Naive thymus-derived CD4-positive, alpha-beta T cell (primary cell): ENCODE measurements at regions of chr19 and their contacts with region 1.

Region 1: GRCh38 chr19:50329146-50329925 is at the start of gene KCNC3:
- DNase-seq: peak in 8 of 9 donors; percentile 69 to 96 (median 86)
- ATAC-seq: peak; percentile 77
- H3K4me3 ChIP-seq: peak within 1 kb of the TSS; percentile 39
- H3K4me3 Mint-ChIP-seq: peak within 1 kb of the TSS; percentile 72 to 97 (median 86)
- H3K27ac ChIP-seq: no peak within 1 kb of the TSS
- H3K27ac Mint-ChIP-seq: peak within 1 kb of the TSS; percentile 55 to 96 (median 87)
- H3K4me1 ChIP-seq: peaks cover 42 to 62% of the 10 kb centered on the region in 2 donors
- H3K4me1 Mint-ChIP-seq: peaks cover 43 to 75% (median 73%) of the 10 kb centered on the region in 7 donors
- H3K27me3 ChIP-seq: peaks cover 15 to 28% of the 10 kb centered on the region in 2 donors
- H3K27me3 Mint-ChIP-seq: peaks cover 20 to 62% (median 41%) of the 10 kb centered on the region in 5 donors
- total RNA-seq, gene KCNC3: 1.9 to 11.1 (median 2.4) TPM

Region 2: GRCh38 chr19:50376166-50377050 is 47.1 kb after region 1 on chr19 and contains the start of gene NR1H2:
- CTCF ChIA-PET with region 1: no interaction called
- POLR2A ChIA-PET with region 1: no interaction called
- intact Hi-C with region 1: loop called (anchors 1 kb)
- DNase-seq: peak; percentile 89 to 97 (median 95)
- ATAC-seq: peak; percentile 94
- H3K4me3 ChIP-seq: peak within 1 kb of the TSS; percentile 99
- H3K4me3 Mint-ChIP-seq: peak within 1 kb of the TSS; percentile 92 to 100 (median 98)
- H3K27ac ChIP-seq: peak within 1 kb of the TSS; percentile 100
- H3K27ac Mint-ChIP-seq: peak within 1 kb of the TSS; percentile 99 to 100 (median 100)
- H3K4me1 ChIP-seq: peaks cover 4 to 10% of the 10 kb centered on the region in 2 donors
- H3K4me1 Mint-ChIP-seq: peaks cover 12 to 37% (median 24%) of the 10 kb centered on the region in 7 donors
- H3K27me3 ChIP-seq: no peaks in the 10 kb centered on the region
- H3K27me3 Mint-ChIP-seq: no peaks in the 10 kb centered on the region
- total RNA-seq, gene NR1H2: 66.6 to 284 (median 114) TPM

Region 3: DNA sequence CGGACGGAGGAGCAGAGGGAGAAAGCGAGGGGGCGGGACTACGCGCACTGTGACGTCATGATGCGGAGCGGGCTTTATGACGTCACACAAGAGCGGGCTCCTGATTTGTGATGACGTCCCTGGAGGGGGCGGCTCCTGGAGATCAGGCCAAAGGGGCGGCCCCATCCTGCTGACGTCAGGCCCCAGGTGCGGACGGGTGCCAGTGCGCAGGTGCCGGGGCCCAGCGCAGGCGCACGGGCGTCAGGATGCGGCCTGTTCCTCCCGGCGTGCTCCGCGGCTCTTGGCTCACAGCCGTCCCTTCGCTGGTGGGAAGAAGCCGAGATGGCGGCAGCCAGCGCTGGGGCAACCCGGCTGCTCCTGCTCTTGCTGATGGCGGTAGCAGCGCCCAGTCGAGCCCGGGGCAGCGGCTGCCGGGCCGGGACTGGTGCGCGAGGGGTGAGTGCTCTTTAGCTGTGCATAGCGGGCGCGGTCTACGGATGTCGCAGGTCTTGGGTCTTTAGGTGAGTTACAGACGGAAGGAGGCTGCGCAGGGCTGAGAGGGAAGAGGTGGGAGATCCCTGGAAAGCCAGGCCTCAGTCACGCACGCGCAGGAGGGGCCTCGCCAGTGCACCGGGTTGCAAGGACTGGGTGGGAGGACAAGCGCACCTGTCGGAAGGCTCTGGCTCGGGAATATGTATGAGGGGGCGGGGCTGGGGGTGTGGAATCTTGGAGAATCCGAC is 147.0 kb after region 1 on chr19 and contains the starts of genes EMC10 and GARIN5A:
- CTCF ChIA-PET with region 1: no interaction called
- POLR2A ChIA-PET with region 1: no interaction called
- intact Hi-C with region 1: loop called in 1 of 2 experiments (anchors 1 kb)
- DNase-seq: peak; percentile 92 to 96 (median 95)
- ATAC-seq: peak; percentile 97
- H3K4me3 ChIP-seq: peak within 1 kb of the TSS; percentile 96
- H3K4me3 Mint-ChIP-seq: peak within 1 kb of the TSS; percentile 94 to 99 (median 98)
- H3K27ac ChIP-seq: peak within 1 kb of the TSS; percentile 96
- H3K27ac Mint-ChIP-seq: peak within 1 kb of the TSS; percentile 88 to 98 (median 96)
- H3K4me1 ChIP-seq: peaks cover 14 to 19% of the 10 kb centered on the region in 2 donors
- H3K4me1 Mint-ChIP-seq: peaks cover 21 to 36% (median 27%) of the 10 kb centered on the region in 7 donors
- H3K27me3 ChIP-seq: no peaks in the 10 kb centered on the region
- H3K27me3 Mint-ChIP-seq: no peaks in the 10 kb centered on the region
- total RNA-seq, gene EMC10: 75.5 to 95.2 (median 88.1) TPM
- total RNA-seq, gene GARIN5A: 0.59 to 0.93 (median 0.68) TPM in 4 of 5 experiments, not detected in the other

Region 4: DNA sequence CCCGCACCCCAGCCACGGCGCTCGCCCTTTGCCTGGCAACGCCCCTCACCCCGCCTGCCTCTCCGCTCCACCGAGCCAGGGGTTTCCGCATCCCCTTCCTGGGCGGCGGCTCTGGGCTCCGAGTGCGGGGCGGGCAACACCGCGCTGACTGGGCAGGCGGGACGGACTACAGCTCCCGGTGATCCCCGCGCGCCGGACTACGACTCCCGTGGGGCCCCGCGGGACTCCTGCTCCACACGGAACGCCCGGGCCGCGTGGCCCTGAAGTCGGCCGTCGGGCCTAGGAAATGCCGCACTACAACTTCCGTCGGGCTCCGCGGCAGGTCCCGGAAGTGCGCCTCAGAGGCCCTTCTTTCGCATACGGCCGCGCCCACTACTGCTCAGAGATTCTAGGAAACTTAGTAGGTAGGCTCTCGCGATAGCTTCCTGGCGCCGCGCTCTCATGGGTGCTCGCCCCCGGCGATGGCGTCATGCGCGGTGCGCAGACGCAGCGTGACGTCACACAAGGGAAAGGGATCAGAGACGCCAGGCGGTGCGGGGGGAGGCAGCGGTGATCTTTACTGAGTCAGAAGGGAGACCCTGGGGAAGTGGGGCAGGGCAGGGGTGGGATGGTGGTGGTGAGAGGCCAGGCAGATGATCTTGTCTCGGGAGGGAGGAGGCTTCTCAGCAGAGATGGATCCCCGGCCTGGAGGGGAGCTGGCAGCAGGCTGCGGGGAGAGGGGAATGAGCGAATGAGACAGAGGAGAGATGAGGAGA is 181.9 kb after region 1 on chr19 and contains the start of gene JOSD2:
- CTCF ChIA-PET with region 1: no interaction called
- POLR2A ChIA-PET with region 1: interaction called, 5 read pairs
- intact Hi-C with region 1: loop called (anchors 1 kb)
- DNase-seq: peak; percentile 89 to 99 (median 96)
- ATAC-seq: peak; percentile 94
- H3K4me3 ChIP-seq: peak within 1 kb of the TSS; percentile 75
- H3K4me3 Mint-ChIP-seq: peak within 1 kb of the TSS; percentile 75 to 97 (median 88)
- H3K27ac ChIP-seq: peak within 1 kb of the TSS; percentile 86
- H3K27ac Mint-ChIP-seq: peak within 1 kb of the TSS; percentile 87 to 99 (median 97)
- H3K4me1 ChIP-seq: peaks cover 7 to 16% of the 10 kb centered on the region in 2 donors
- H3K4me1 Mint-ChIP-seq: peaks cover 0 to 27% (median 19%) of the 10 kb centered on the region in 7 donors
- H3K27me3 ChIP-seq: no peaks in the 10 kb centered on the region
- H3K27me3 Mint-ChIP-seq: peaks cover 0 to 16% (median 6%) of the 10 kb centered on the region in 5 donors
- total RNA-seq, gene JOSD2: 13.0 to 45.9 (median 22.7) TPM

Region 5: DNA sequence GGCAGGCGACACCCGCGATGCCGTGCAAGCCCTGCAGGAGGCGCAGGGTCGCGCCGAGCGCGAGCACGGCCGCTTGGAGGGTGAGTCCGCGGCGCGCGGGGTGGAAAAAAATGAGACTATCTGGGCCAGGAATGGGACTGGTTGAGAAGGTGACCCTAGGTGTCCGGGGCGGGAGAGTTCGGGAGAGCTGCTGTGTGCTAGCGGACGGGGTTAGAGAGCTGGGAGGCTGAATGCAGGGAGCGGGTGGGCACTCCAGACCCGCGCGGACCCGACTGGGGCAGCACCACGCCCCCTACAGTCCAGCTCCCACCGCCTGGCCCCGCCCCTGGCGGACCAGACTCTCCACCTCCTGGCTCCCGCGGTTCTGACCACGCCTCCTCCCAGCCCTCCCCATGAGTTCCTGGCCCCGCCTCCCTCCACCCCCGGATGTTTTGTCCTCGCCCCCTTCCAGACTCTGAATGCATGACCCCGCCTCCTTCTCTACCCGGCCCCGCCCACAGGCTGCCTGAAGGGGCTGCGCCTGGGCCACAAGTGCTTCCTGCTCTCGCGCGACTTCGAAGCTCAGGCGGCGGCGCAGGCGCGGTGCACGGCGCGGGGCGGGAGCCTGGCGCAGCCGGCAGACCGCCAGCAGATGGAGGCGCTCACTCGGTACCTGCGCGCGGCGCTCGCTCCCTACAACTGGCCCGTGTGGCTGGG is 395.3 kb after region 1 on chr19:
- CTCF ChIA-PET with region 1: interaction called, 4 read pairs
- POLR2A ChIA-PET with region 1: no interaction called
- intact Hi-C with region 1: loop called in 1 of 2 experiments (anchors 10 kb)
- DNase-seq: peak; percentile 74 to 99 (median 94)
- ATAC-seq: peak; percentile 93
- H3K4me3 ChIP-seq: peak overlapping the region; percentile 62
- H3K4me3 Mint-ChIP-seq: peak overlapping the region; percentile 79 to 92 (median 84)
- H3K27ac ChIP-seq: peak overlapping the region; percentile 66
- H3K27ac Mint-ChIP-seq: peak overlapping the region in 8 of 9 donors; percentile 34 to 87 (median 70)
- H3K4me1 ChIP-seq: peaks cover 5 to 12% of the 10 kb centered on the region in 2 donors
- H3K4me1 Mint-ChIP-seq: peaks cover 0 to 34% (median 24%) of the 10 kb centered on the region in 7 donors
- H3K27me3 ChIP-seq: peaks cover 5 to 12% of the 10 kb centered on the region in 2 donors
- H3K27me3 Mint-ChIP-seq: peaks cover 47 to 70% (median 53%) of the 10 kb centered on the region in 5 donors

Region 6: DNA sequence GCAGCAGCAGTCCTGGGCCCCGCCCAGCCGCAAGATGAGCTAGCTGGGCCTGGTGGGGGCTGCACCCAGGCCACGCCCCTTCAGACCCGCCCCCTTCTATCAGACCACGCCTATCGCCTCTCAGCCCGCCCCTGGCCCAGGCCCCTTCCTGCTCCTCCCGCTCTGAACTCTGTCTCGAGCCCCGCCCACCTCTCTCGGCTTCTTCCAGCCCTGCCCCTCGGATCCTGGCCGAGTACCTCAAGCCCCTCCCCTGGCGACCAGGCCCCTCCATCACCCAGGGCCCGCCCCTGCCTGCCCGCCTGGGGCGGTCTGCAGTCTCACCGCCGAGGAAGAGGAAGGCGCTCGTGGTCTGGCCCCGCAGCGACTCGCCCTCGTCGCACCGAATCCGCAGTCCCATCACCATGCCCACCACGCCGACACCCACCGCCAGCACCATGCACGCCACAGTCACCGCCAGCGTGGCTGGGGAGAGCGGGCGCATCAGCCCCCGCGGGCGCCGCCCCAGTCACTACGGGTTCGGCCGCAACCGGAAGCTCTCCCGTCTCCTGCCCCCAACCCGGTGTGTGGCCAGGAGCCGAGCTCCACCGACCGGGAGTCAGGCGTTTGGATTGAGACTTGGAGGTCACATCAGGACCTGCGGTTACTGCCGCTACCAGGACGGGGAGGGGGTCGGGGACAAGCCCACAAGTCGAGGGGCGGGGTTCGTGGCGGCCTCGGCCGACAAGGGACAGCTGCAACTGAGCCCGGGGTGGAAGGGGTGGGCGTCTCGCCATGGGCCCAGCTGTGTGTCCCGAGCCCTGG is 1038.4 kb after region 1 on chr19:
- CTCF ChIA-PET with region 1: no interaction called
- POLR2A ChIA-PET with region 1: no interaction called
- intact Hi-C with region 1: loop called in 1 of 2 experiments (anchors 5 kb)
- DNase-seq: peak; percentile 84 to 100 (median 90)
- ATAC-seq: peak; percentile 93
- H3K4me3 ChIP-seq: peak overlapping the region; percentile 96
- H3K4me3 Mint-ChIP-seq: peak overlapping the region; percentile 92 to 100 (median 98)
- H3K27ac ChIP-seq: peak overlapping the region; percentile 81
- H3K27ac Mint-ChIP-seq: peak overlapping the region; percentile 79 to 98 (median 95)
- H3K4me1 ChIP-seq: peaks cover 23 to 26% of the 10 kb centered on the region in 2 donors
- H3K4me1 Mint-ChIP-seq: peaks cover 53 to 81% (median 59%) of the 10 kb centered on the region in 7 donors
- H3K27me3 ChIP-seq: no peaks in the 10 kb centered on the region
- H3K27me3 Mint-ChIP-seq: no peaks in the 10 kb centered on the region